Posterior vena cava (tissue), 2 donors: ENCODE measurements at regions of chr7 and their contacts with region 1.

Region 1: DNA sequence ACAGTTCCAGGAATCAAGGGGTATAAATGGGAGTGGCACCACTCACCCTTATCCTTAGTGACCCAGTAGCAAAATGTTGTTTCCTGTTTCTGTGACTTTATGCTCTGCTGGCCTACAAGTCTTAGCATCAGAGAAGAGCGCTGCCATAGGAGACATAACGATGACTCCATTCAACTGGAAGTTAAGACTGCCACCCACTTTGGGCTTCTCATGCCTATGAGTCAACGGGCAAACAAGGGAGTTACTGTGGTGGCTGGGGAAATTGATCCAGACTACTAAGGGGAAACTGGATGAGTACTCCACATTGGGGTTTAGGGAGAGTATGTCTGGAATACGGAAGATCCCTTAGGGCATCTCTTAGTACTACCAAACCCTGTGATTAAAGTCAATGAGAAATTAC is 40.6 kb upstream of the PIK3CG start:
- DNase-seq: no peak

Region 2: GRCh38 chr7:106236065-106236464 is 588.4 kb before region 1 on chr7:
- intact Hi-C with region 1: no loop called
- DNase-seq: no peak

Region 3: DNA sequence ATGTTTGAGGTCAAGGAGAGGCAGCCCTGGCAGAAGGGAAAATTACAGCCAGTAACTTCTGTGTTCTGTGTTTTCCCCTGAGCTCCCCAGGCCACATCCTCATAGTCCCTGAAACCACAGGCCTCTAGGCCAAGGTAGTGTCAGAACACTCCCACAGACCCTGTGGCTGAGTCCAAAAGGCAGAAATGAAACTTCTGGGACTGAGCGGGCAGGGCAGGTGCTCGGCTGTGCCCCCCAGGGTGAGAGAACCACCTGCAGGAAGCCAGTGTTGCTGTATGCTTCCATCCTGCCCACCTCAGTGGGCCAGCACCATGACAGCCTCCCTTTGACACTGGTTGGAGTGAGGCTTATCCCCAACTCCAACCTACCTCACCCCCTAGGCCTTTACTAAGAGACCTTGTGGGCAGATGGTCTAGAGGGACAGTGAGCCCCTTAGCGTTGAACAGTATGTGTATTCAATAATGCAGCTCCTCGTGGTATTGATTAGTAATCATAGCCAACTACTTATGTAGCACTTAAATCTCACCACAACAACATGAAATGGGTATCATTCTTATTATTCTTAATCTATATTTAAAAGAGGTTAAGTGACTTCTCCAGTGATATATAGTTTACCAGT is 70.9 kb after region 1 on chr7:
- intact Hi-C with region 1: no loop called
- DNase-seq: no peak

Region 4: DNA sequence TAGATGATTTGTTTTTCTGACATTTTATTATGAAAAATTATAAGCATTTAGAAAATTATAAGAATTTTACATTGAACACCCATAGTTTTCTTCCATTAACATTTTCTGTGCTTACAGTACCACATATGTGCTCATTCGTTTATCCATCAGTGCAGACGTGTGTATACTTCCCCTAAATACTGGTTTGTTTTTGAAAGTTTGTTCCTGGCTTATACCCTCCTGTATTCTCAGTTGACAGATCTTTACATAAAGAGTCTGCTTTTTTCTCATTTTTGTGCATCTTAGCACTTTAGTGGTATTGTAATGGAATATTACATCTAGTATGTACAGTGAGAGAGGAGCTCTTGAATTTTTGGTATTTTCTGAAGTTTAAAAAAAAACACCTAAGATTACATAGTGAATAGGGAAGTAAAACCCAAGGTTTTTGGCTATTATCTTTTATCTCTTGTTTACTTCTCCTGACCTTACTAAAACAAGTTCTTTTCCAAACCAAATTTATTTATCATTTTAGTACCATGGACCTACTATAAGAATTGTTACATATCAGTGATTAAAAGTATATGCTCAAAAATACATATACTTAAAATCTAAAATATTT is 1074.6 kb after region 1 on chr7:
- intact Hi-C with region 1: loop called in 1 of 2 experiments (anchors 5 kb)
- DNase-seq: no peak